Uterus (tissue), 4 donors: ENCODE measurements at regions of chr20 and their contacts with region 1.

Region 1: GRCh38 chr20:23245553-23246181 is 104.9 kb upstream of the NXT1 start:
- DNase-seq: peak in 1 of 2 donors; percentile 25
- H3K4me3 ChIP-seq: no peak overlapping the region
- H3K27ac ChIP-seq: no peak overlapping the region
- H3K4me1 ChIP-seq: no peaks in the 10 kb centered on the region
- H3K27me3 ChIP-seq: no peaks in the 10 kb centered on the region
- CTCF ChIP-seq: peak in 3 of 4 experiments; percentile 17 to 49 (median 18)
- POLR2A ChIP-seq: no peak

Region 2: GRCh38 chr20:22691369-22692118 is 554.1 kb before region 1 on chr20:
- intact Hi-C with region 1: loop called (anchors 10 kb)
- DNase-seq: peak; percentile 52 to 67
- H3K4me3 ChIP-seq: no peak overlapping the region
- H3K27ac ChIP-seq: no peak overlapping the region
- H3K4me1 ChIP-seq: no peaks in the 10 kb centered on the region
- H3K27me3 ChIP-seq: no peaks in the 10 kb centered on the region
- CTCF ChIP-seq: peak; percentile 82 to 93 (median 88)
- POLR2A ChIP-seq: no peak

Region 3: DNA sequence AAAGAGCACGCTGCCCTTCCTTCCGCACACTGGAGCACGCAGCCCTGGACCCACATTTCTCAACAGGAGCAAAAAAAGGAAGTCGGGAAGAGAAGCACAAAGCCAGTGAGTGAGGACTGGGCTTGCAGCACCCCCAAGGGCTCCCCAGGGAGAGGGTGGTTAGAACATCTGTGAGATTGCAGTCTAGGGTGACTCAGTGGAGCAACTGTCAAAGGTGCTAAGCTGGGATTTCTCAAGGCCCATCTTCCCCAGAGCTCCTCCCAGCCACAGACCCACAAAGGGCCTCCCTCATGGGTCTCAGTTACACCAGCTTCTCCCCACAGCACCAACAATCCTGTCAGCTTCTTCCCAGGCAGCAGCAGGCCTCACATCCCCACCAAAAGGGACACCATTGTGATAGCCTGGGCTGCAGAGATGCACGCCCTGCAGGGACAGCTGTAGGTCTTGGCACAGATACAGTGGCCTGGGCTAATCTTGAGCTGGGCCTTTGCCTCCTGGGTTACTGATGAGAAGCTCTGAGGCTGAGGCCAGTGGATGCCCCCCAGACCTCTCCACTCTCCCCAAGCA is 120.0 kb before region 1 on chr20:
- intact Hi-C with region 1: no loop called
- DNase-seq: no peak
- H3K4me3 ChIP-seq: no peak overlapping the region
- H3K27ac ChIP-seq: no peak overlapping the region
- H3K4me1 ChIP-seq: no peaks in the 10 kb centered on the region
- H3K27me3 ChIP-seq: no peaks in the 10 kb centered on the region
- CTCF ChIP-seq: no peak
- POLR2A ChIP-seq: no peak